Ascending aorta (tissue), 2 donors: ENCODE measurements at regions of chr4 and their contacts with region 1.

Region 1: GRCh38 chr4:124067046-124067445 is 645.5 kb downstream of the ANKRD50 start:
- DNase-seq: no peak
- H3K4me3 ChIP-seq: no peak overlapping the region
- H3K27ac ChIP-seq: no peak overlapping the region
- H3K4me1 ChIP-seq: peaks cover 0 to 5% of the 10 kb centered on the region in 2 donors
- H3K27me3 ChIP-seq: no peaks in the 10 kb centered on the region
- CTCF ChIP-seq: no peak

Region 2: DNA sequence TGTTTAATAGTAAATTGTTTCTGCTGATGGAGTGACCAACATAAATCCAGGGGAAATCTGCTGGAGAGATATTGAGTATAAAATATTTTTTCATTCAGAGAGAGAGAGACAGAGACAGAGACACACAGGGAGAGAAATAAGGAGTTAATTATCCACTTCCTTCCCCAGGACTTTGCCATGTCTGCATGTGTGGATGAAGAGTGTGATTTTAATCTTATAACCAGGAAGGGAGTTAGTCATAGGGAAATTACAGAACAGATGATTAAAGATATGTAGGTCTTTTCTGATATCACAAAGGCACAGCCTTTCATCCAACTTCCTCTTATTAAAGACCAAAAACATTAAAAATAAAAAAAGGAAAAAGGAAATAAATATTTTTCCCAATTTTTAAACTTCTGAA is 144.2 kb before region 1 on chr4:
- intact Hi-C with region 1: no loop called
- DNase-seq: no peak
- H3K4me3 ChIP-seq: no peak overlapping the region
- H3K27ac ChIP-seq: no peak overlapping the region
- H3K4me1 ChIP-seq: no peaks in the 10 kb centered on the region
- H3K27me3 ChIP-seq: no peaks in the 10 kb centered on the region
- CTCF ChIP-seq: no peak

Region 3: DNA sequence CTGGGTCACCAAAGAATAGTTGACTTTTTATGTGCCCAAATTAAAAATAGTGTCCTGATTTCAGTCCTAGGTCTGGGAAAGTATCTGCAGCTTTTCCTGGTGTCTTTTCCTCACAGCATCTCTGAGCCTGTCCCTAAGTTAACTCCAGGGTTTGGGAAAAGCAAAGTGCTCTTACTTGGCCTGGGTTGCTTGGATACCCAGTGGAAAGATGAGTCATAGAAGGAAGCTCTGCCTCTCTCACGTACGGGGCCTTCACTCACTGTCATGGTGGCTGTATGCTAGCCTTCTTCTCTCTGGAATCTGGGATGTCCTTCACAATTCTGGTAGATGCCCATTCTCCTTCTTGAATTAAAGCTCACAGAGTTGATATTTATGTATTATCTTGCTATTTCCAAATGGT is 38.2 kb after region 1 on chr4:
- intact Hi-C with region 1: loop called (anchors 5 kb)
- DNase-seq: no peak
- H3K4me3 ChIP-seq: no peak overlapping the region
- H3K27ac ChIP-seq: no peak overlapping the region
- H3K4me1 ChIP-seq: no peaks in the 10 kb centered on the region
- H3K27me3 ChIP-seq: no peaks in the 10 kb centered on the region
- CTCF ChIP-seq: no peak